OCI-LY7 (cell line): ENCODE measurements at regions of chr15 and their contacts with region 1.

Region 1: GRCh38 chr15:82046666-82047452 is 1.0 kb upstream of the MEX3B start:
- DNase-seq: peak; percentile 92
- H3K4me3 ChIP-seq: peak overlapping the region; percentile 91
- H3K27ac ChIP-seq: peak overlapping the region; percentile 85
- H3K4me1 ChIP-seq: peaks cover 8% of the 10 kb centered on the region
- CTCF ChIP-seq: peak; percentile 72

Region 2: GRCh38 chr15:81000624-81001151 is 1046.2 kb before region 1 on chr15 and contains the start of gene TLNRD1:
- CTCF ChIA-PET with region 1: no interaction called
- POLR2A ChIA-PET with region 1: no interaction called
- intact Hi-C with region 1: loop called (anchors 10 kb)
- DNase-seq: peak; percentile 86
- H3K4me3 ChIP-seq: peak within 1 kb of the TSS; percentile 77
- H3K27ac ChIP-seq: peak within 1 kb of the TSS; percentile 65
- H3K4me1 ChIP-seq: peaks cover 31% of the 10 kb centered on the region
- CTCF ChIP-seq: no peak
- total RNA-seq, gene TLNRD1: 17.0 and 19.9 TPM in 2 replicates

Region 3: GRCh38 chr15:81296673-81297072 is 750.2 kb before region 1 on chr15:
- CTCF ChIA-PET with region 1: no interaction called
- POLR2A ChIA-PET with region 1: no interaction called
- intact Hi-C with region 1: loop called (anchors 10 kb)
- DNase-seq: peak; percentile 94
- H3K4me3 ChIP-seq: peak overlapping the region; percentile 92
- H3K27ac ChIP-seq: peak overlapping the region; percentile 98
- H3K4me1 ChIP-seq: peaks cover 73% of the 10 kb centered on the region
- CTCF ChIP-seq: no peak

Region 4: GRCh38 chr15:81819924-81820635 is 226.8 kb before region 1 on chr15:
- CTCF ChIA-PET with region 1: no interaction called
- POLR2A ChIA-PET with region 1: no interaction called
- intact Hi-C with region 1: loop called (anchors 10 kb)
- DNase-seq: no peak
- H3K4me3 ChIP-seq: no peak overlapping the region
- H3K27ac ChIP-seq: no peak overlapping the region
- H3K4me1 ChIP-seq: peaks cover 6% of the 10 kb centered on the region
- CTCF ChIP-seq: no peak

Region 5: DNA sequence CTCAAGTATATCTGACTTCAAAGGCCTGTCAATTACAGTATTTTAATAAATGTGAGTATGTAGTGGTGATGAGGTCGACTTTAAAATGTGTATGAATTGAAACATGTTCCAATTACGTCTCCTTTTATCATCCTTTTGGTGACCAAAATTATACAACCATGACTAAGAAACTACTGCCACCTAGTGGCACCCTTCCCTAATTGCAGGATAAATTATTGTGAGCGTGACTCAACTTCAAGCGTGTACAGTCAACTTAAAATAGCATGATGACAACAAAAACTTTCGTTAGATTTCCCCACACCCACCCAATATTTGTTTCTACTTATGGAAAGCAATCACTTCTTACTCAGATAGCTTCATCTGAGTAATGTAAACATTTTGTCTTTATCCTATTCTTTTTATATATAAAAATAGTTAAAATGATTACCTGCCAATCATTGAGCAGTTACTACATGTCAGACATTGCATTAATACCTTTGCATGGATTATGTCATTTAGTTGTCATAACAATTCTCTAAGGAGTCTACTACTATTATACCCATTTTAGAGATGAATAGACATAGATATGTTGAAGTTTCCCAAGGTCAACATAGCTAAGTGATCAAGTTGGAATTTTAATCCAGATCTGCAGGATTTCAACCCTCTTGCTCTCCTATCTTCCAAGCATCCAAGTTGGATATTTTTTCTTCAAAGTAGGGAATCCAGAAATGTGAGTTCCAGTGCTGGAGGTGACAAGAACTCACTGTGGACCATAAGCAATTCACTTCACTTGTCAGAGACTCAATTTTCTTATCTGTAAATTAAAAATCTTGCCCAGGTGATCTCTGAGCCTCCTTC is 107.0 kb before region 1 on chr15:
- CTCF ChIA-PET with region 1: interaction called, 3 read pairs
- POLR2A ChIA-PET with region 1: no interaction called
- intact Hi-C with region 1: loop called (anchors 5 kb)
- DNase-seq: peak; percentile 67
- H3K4me3 ChIP-seq: no peak overlapping the region
- H3K27ac ChIP-seq: no peak overlapping the region
- H3K4me1 ChIP-seq: no peaks in the 10 kb centered on the region
- CTCF ChIP-seq: peak; percentile 98

Region 6: DNA sequence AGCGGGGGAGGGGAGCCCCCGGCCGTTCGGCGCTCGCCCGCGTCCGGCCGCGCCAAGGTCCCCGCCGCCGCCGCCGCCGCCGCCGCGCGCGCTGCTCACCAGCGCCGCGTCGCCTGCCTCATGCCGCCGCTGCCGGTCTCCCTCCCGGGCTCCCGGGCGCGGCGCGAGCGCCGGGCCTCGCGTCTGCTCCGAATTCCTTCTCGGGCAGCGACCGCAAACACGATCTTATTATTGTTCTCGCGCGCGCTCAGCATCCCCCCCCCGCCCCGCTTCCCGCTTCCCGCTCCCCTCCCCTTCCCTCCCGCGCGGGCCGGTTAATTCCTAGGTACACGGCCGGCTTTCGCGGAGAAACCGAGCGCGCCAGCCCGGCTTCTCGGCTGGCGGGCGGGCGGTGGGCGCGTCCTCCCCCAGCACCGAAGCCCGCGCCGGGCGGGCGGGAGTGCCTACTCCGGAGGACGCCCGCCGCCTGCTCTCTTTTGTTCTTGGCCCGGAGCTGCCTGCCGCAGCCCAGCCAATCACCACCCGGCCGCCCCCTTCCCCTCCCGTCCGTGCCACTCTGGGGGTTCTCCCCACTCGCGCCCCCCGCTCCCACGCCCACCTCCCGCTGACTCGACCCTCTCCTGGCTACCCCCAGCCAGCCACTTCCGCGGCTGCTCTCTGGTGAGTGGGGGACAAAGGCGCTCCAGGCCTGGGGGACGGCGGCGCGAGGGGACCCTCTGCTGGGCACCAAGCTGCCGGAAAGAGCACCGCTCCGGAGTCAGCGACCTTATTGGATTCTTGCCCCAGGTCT is 1161.0 kb after region 1 on chr15 and contains the start of gene HDGFL3:
- CTCF ChIA-PET with region 1: no interaction called
- POLR2A ChIA-PET with region 1: no interaction called
- intact Hi-C with region 1: loop called (anchors 5 kb)
- DNase-seq: peak; percentile 72
- H3K4me3 ChIP-seq: peak within 1 kb of the TSS; percentile 89
- H3K27ac ChIP-seq: peak within 1 kb of the TSS; percentile 47
- H3K4me1 ChIP-seq: peaks cover 25% of the 10 kb centered on the region
- CTCF ChIP-seq: peak; percentile 57
- total RNA-seq, gene HDGFL3: 29.3 and 57.6 TPM in 2 replicates